PC-9 (cell line): ENCODE measurements at regions of chr4 and their contacts with region 1.

Region 1: DNA sequence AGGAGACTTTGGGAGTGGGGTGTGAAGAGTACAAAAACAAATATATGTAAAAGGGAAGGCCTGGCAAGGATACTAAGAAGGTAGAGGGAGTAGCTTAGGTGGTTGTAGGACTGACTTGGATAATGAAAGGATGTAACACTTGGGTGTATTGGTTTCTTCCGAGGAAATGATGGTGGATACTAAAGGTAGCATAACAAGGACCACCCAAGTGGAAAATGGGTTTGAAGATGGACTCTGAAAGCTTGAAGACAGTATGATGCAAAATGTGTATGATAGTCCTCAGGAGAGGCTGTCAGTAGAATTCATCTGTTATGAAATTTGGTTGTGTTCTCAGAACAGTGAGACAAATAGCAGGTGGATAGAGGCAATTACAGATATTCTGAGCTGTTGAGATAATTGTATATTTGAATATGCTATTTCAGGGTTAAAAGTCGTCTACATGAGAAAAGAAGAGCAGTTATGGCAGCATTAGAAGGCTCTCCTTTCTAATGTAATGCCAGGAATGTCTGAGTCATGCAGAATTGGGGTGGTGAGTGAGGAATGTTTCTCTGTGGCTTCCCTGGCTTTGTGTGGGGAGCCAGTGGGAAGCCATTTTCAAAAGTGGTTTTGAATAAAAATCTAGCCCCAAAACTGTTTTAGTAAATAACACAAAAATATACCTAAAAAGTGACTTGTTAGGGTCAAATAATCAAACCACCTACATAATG is 75.6 kb downstream of the FHIP1A start:
- DNase-seq: peak; percentile 57 to 76
- H3K4me3 ChIP-seq: no peak overlapping the region
- H3K27ac ChIP-seq: peak overlapping the region; percentile 54
- H3K4me1 ChIP-seq: peaks cover 27% of the 10 kb centered on the region
- H3K27me3 ChIP-seq: no peaks in the 10 kb centered on the region
- CTCF ChIP-seq: no peak

Region 2: GRCh38 chr4:150683775-150684350 is 800.7 kb before region 1 on chr4:
- CTCF ChIA-PET with region 1: no interaction called
- POLR2A ChIA-PET with region 1: no interaction called
- intact Hi-C with region 1: no loop called
- DNase-seq: no peak
- H3K4me3 ChIP-seq: no peak overlapping the region
- H3K27ac ChIP-seq: no peak overlapping the region
- H3K4me1 ChIP-seq: no peaks in the 10 kb centered on the region
- H3K27me3 ChIP-seq: no peaks in the 10 kb centered on the region
- CTCF ChIP-seq: no peak

Region 3: DNA sequence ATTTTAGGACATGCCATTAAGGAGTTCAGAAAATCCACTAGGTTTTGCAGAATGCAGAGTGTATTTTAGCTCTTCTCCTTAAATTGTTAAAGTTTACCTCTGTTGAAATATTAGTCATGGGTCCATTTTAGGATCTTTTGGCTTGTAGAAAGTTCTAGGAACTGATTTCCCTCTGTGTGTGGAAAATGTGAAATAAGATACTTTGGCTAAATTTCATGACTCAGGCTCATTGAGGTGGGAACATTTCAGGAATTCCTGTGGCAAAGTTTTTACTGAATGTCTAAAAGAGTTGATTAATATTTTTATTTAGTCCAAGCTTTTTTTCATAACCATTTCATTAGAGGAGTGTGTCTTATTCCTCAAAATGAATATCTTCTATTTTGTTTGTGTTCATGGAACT is 68.6 kb before region 1 on chr4:
- CTCF ChIA-PET with region 1: interaction called, 5 read pairs
- POLR2A ChIA-PET with region 1: interaction called, 8 read pairs
- intact Hi-C with region 1: loop called (anchors 2 kb)
- DNase-seq: peak in 1 of 2 experiments; percentile 70
- H3K4me3 ChIP-seq: no peak overlapping the region
- H3K27ac ChIP-seq: peak overlapping the region; percentile 71
- H3K4me1 ChIP-seq: peaks cover 52% of the 10 kb centered on the region
- H3K27me3 ChIP-seq: no peaks in the 10 kb centered on the region
- CTCF ChIP-seq: no peak

Region 4: DNA sequence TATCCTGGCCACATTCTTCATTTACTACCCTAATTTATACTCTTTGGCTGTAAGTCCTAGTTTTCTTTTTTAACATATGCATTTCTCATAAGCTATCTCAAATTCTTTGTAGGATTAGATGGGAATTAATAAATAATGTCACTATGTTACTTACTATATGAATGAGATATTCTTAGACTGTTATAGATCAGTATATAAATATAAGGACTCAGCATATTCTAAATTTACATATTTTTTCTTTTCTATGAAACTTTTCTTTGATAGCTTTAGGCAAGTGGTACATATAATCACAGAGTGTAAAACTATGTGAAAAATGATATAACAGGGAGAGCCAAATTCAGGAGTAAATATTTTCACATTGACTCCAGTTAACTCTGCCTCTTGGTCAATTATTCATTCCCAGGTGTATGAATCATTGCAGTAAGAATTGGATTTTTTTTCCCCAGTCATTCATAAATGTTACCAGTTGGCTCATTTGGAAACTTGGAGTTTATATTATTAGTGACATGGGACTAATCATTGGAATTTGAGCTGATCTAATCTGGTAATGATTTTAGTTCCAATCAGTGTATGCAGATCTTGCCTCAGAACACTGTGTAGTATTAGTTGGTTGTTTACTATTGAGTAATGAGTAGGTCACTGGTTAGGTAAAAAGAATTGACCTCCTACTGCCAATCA is 50.2 kb before region 1 on chr4:
- CTCF ChIA-PET with region 1: no interaction called
- POLR2A ChIA-PET with region 1: no interaction called
- intact Hi-C with region 1: loop called (anchors 1 kb)
- DNase-seq: peak in 1 of 2 experiments; percentile 85
- H3K4me3 ChIP-seq: no peak overlapping the region
- H3K27ac ChIP-seq: peak overlapping the region; percentile 59
- H3K4me1 ChIP-seq: peaks cover 34% of the 10 kb centered on the region
- H3K27me3 ChIP-seq: no peaks in the 10 kb centered on the region
- CTCF ChIP-seq: no peak

Region 5: DNA sequence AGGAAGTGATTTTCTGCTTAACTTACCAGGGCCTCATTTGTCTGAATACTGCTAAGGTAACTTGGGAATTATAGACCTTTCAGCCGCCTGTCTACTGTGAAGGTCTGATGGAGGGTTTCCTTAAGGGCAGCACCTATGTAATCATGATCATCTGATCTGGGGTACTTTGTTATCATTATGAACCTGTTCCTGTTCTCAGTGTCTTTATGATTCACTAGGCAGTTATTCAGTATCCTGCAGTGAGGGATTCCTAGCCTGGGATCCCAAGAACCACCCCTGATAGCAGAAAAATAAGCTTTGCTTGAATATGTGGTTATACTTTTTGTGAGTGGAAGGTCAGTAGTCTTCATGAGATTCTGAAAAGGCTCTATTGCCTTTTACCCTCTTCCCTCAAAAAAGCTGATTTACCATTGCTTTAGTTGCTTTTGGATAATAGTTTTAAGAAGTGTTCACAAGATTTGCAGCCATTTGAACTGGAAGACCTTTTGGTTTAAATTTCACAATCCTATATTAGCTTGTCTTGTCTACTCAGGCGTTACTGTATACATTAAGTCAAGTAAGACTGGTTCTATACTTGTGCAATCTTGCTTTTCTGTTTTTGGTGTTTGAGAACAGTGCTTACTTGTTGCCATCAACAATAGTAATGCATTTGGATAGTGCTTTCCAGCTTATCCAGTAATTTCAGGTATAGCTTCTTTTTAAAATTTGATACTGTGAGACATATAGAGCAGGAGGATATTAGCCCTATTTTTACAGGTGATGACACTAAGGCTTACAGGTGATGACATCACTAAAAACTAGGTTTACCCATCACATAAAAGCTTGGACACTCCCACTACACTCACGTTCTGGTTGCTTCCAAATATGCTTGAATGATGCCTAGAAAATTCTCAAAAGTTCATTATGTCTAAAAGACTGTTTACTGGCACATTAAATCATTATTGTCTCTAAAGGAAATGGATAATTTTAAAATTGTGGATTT is 15.5 kb before region 1 on chr4:
- CTCF ChIA-PET with region 1: no interaction called
- POLR2A ChIA-PET with region 1: interaction called, 9 read pairs
- intact Hi-C with region 1: loop called (anchors 1 kb)
- DNase-seq: peak in 1 of 2 experiments; percentile 93
- H3K4me3 ChIP-seq: no peak overlapping the region
- H3K27ac ChIP-seq: peak overlapping the region; percentile 72
- H3K4me1 ChIP-seq: peaks cover 40% of the 10 kb centered on the region
- H3K27me3 ChIP-seq: no peaks in the 10 kb centered on the region
- CTCF ChIP-seq: no peak

Region 6: GRCh38 chr4:151540728-151541422 is 56.3 kb after region 1 on chr4:
- CTCF ChIA-PET with region 1: no interaction called
- POLR2A ChIA-PET with region 1: interaction called, 12 read pairs
- intact Hi-C with region 1: loop called (anchors 1 kb)
- DNase-seq: peak; percentile 68 to 92
- H3K4me3 ChIP-seq: no peak overlapping the region
- H3K27ac ChIP-seq: peak overlapping the region; percentile 50
- H3K4me1 ChIP-seq: peaks cover 23% of the 10 kb centered on the region
- H3K27me3 ChIP-seq: no peaks in the 10 kb centered on the region
- CTCF ChIP-seq: no peak

Region 7: GRCh38 chr4:151604238-151604637 is 119.7 kb after region 1 on chr4:
- CTCF ChIA-PET with region 1: interaction called, 3 read pairs
- POLR2A ChIA-PET with region 1: no interaction called
- intact Hi-C with region 1: loop called (anchors 1 kb)
- DNase-seq: peak in 1 of 2 experiments; percentile 2
- H3K4me3 ChIP-seq: no peak overlapping the region
- H3K27ac ChIP-seq: no peak overlapping the region
- H3K4me1 ChIP-seq: no peaks in the 10 kb centered on the region
- H3K27me3 ChIP-seq: no peaks in the 10 kb centered on the region
- CTCF ChIP-seq: peak; percentile 69